H1 (cell line): ENCODE measurements at regions of chr21 and their contacts with region 1.

Region 1: GRCh38 chr21:31612894-31613745 is 46.4 kb upstream of the SOD1 start:
- DNase-seq: no peak
- H3K4me3 ChIP-seq: no peak overlapping the region
- H3K27ac ChIP-seq: no peak overlapping the region
- H3K4me1 ChIP-seq: no peaks in the 10 kb centered on the region
- H3K27me3 ChIP-seq: no peaks in the 10 kb centered on the region
- CTCF ChIP-seq: no peak
- EP300 ChIP-seq: no peak
- POLR2A ChIP-seq: no peak
- RAD21 ChIP-seq: no peak

Region 2: DNA sequence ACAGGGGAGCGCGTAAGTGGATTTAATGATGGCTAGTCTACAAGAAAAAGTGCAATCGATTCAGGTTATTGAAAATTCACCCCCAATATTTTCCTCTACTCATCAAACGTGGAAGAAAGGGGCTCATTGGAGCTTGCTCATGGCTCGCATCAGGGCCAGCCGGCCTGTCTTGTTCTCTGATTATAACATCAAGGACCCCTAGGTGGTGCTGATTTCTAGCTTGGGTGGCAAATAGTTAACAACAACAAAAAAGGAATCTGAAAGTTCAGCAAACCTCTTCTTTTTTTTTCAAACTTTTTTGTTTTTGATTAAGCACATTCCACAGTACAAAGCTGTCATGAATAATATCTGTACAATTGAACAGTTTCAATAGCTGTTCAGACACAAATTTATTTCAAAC is 10.5 kb after region 1 on chr21:
- CTCF ChIA-PET with region 1: interaction called, 14 read pairs
- POLR2A ChIA-PET with region 1: interaction called, 3 read pairs
- DNase-seq: no peak
- H3K4me3 ChIP-seq: no peak overlapping the region
- H3K27ac ChIP-seq: no peak overlapping the region
- H3K4me1 ChIP-seq: no peaks in the 10 kb centered on the region
- H3K27me3 ChIP-seq: no peaks in the 10 kb centered on the region
- CTCF ChIP-seq: peak; percentile 10 to 40 (median 31)
- EP300 ChIP-seq: no peak
- POLR2A ChIP-seq: no peak
- RAD21 ChIP-seq: peak; percentile 33 to 58